Astrocyte of the cerebellum (primary cell): ENCODE measurements at regions of chr16 and their contacts with region 1.

Region 1: GRCh38 chr16:11016993-11017392 is 72.6 kb downstream of the CLEC16A start:
- DNase-seq: no peak
- H3K4me3 ChIP-seq: no peak overlapping the region
- CTCF ChIP-seq: no peak

Region 2: GRCh38 chr16:10981697-10982216 is 35.2 kb before region 1 on chr16:
- in situ Hi-C with region 1: loop called (anchors 5 kb)
- DNase-seq: no peak
- H3K4me3 ChIP-seq: no peak overlapping the region
- CTCF ChIP-seq: peak; percentile 31

Region 3: DNA sequence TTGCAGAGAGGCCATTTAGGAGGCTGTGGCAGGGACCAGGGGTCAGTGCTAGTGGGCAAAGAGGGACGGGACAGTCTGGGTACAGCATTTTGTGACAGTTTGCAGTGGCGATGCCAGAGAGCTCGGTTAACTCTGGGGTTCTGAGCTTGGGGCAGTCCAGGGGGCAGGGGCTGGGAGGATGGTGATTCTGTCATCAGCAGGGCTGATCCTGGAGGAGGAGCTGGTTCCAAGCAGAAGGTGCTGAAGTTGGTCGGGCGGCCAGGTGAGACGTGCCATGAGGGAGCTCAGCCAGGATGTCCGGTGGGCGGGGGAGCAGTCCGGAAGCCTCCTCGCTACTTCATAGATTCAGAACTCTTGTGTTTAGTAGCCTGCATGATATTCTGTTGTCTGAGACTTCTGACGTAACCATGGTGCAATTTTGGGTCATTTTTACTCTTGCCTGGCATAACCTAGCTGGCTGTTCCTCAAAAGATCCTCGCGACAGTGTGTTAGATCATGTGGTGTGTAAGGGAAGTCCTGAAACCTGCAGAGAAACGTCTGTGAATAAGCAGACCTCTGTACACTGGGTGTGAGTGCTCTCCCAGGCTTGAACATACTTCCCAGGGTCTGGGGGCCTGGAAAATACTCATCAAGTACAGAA is 49.4 kb after region 1 on chr16:
- in situ Hi-C with region 1: no loop called
- DNase-seq: no peak
- H3K4me3 ChIP-seq: no peak overlapping the region
- CTCF ChIP-seq: no peak